Cardiac septum (tissue), 1 donor: ENCODE measurements at regions of chr1 and their contacts with region 1.

Region 1: GRCh38 chr1:10217748-10218441 is 7.5 kb downstream of the KIF1B start:
- DNase-seq: no peak

Region 2: GRCh38 chr1:9867408-9868243 is 350.3 kb before region 1 on chr1:
- intact Hi-C with region 1: no loop called
- DNase-seq: peak; percentile 92

Region 3: GRCh38 chr1:10253755-10254154 is 35.9 kb after region 1 on chr1:
- intact Hi-C with region 1: loop called (anchors 5 kb)
- DNase-seq: no peak